HepG2 (cell line): ENCODE measurements at regions of chr11 and their contacts with region 1.

Region 1: GRCh38 chr11:76329084-76329984 is 51.6 kb downstream of the THAP12 start:
- DNase-seq: peak; percentile 90
- ATAC-seq: peak; percentile 85
- H3K4me3 ChIP-seq: peak overlapping the region in 1 of 3 experiments; percentile 37; a peak in 1 of 6 replicates
- H3K27ac ChIP-seq: no peak overlapping the region
- H3K4me1 ChIP-seq: peaks cover 35% of the 10 kb centered on the region
- H3K27me3 ChIP-seq: no peaks in the 10 kb centered on the region
- CTCF ChIP-seq: no peak
- EP300 ChIP-seq: peak in 1 of 2 experiments; percentile 73; a peak in 2 of 4 replicates
- POLR2A ChIP-seq: no peak
- RAD21 ChIP-seq: no peak

Region 2: GRCh38 chr11:76293189-76293631 is 36.1 kb before region 1 on chr11:
- CTCF ChIA-PET with region 1: no interaction called
- POLR2A ChIA-PET with region 1: no interaction called
- in situ Hi-C with region 1: no loop called
- intact Hi-C with region 1: no loop called
- DNase-seq: no peak
- ATAC-seq: no peak
- H3K4me3 ChIP-seq: no peak overlapping the region
- H3K27ac ChIP-seq: no peak overlapping the region
- H3K4me1 ChIP-seq: peaks cover 18% of the 10 kb centered on the region
- H3K27me3 ChIP-seq: peaks cover 0 to 5% of the 10 kb centered on the region in 2 experiments; a peak in 1 of 5 replicates
- CTCF ChIP-seq: no peak
- EP300 ChIP-seq: no peak
- POLR2A ChIP-seq: no peak
- RAD21 ChIP-seq: no peak

Region 3: GRCh38 chr11:76419896-76420295 is 90.6 kb after region 1 on chr11:
- CTCF ChIA-PET with region 1: no interaction called
- POLR2A ChIA-PET with region 1: no interaction called
- in situ Hi-C with region 1: no loop called
- intact Hi-C with region 1: loop called (anchors 1 kb)
- DNase-seq: peak; percentile 15
- ATAC-seq: peak; percentile 67
- H3K4me3 ChIP-seq: no peak overlapping the region
- H3K27ac ChIP-seq: no peak overlapping the region
- H3K4me1 ChIP-seq: no peaks in the 10 kb centered on the region
- H3K27me3 ChIP-seq: peaks cover 1 to 11% of the 10 kb centered on the region in 2 experiments; a peak in 1 of 5 replicates
- CTCF ChIP-seq: peak; percentile 64
- EP300 ChIP-seq: no peak
- POLR2A ChIP-seq: no peak
- RAD21 ChIP-seq: no peak; the same call in 1 of the 2 replicates